ENCODE measurements at regions of chr3 and their contacts with region 1.

Region 1: GRCh38 chr3:169744366-169745054 is 20.4 kb downstream of the TERC start:
- DNase-seq: peak; percentile 23
- ATAC-seq: no peak
- H3K4me3 ChIP-seq: no peak overlapping the region
- H3K4me3 Mint-ChIP-seq: no peak overlapping the region
- H3K27ac ChIP-seq: no peak overlapping the region
- H3K27ac Mint-ChIP-seq: no peak overlapping the region
- H3K4me1 ChIP-seq: no peaks in the 10 kb centered on the region
- H3K4me1 Mint-ChIP-seq: no peaks in the 10 kb centered on the region
- H3K27me3 ChIP-seq: peaks cover 0 to 16% (median 11%) of the 10 kb centered on the region in 4 experiments
- H3K27me3 Mint-ChIP-seq: peaks cover 29% of the 10 kb centered on the region
- CTCF ChIP-seq: peak; percentile 46

Region 2: DNA sequence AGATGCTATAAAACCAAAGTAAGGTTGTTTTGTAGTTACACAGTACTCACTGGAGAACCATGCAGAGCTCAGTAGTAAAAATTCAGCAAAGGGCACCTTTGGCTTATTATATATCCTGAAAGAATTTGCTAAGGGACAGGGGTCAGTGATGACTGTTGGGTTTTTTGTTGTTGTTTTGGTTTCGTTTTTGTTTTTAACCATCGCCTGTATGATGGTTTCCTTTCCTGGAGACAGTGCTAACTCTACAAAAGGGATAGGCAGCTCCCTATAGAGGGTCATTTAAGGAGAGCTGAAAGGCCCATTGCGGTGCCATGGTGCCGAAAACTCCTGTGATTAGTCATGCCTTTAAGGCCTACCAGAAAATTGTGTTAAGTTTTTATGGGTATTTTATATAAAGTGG is 1530.6 kb before region 1 on chr3:
- CTCF ChIA-PET with region 1: interaction called, 12 read pairs
- POLR2A ChIA-PET with region 1: no interaction called
- intact Hi-C with region 1: loop called (anchors 5 kb)
- DNase-seq: no peak
- ATAC-seq: no peak
- H3K4me3 ChIP-seq: no peak overlapping the region
- H3K4me3 Mint-ChIP-seq: peak overlapping the region; percentile 8
- H3K27ac ChIP-seq: no peak overlapping the region
- H3K27ac Mint-ChIP-seq: no peak overlapping the region
- H3K4me1 ChIP-seq: no peaks in the 10 kb centered on the region
- H3K4me1 Mint-ChIP-seq: peaks cover 4% of the 10 kb centered on the region
- H3K27me3 ChIP-seq: no peaks in the 10 kb centered on the region
- H3K27me3 Mint-ChIP-seq: no peaks in the 10 kb centered on the region
- CTCF ChIP-seq: no peak

Region 3: GRCh38 chr3:168865022-168865551 is 879.4 kb before region 1 on chr3:
- CTCF ChIA-PET with region 1: interaction called, 10 read pairs
- POLR2A ChIA-PET with region 1: no interaction called
- intact Hi-C with region 1: no loop called
- DNase-seq: peak; percentile 11
- ATAC-seq: no peak
- H3K4me3 ChIP-seq: no peak overlapping the region
- H3K4me3 Mint-ChIP-seq: no peak overlapping the region
- H3K27ac ChIP-seq: no peak overlapping the region
- H3K27ac Mint-ChIP-seq: no peak overlapping the region
- H3K4me1 ChIP-seq: no peaks in the 10 kb centered on the region
- H3K4me1 Mint-ChIP-seq: no peaks in the 10 kb centered on the region
- H3K27me3 ChIP-seq: no peaks in the 10 kb centered on the region
- H3K27me3 Mint-ChIP-seq: peaks cover 4% of the 10 kb centered on the region
- CTCF ChIP-seq: peak; percentile 82

Region 4: GRCh38 chr3:169149349-169149890 is 595.1 kb before region 1 on chr3:
- CTCF ChIA-PET with region 1: interaction called, 16 read pairs
- POLR2A ChIA-PET with region 1: no interaction called
- intact Hi-C with region 1: loop called (anchors 5 kb)
- DNase-seq: peak; percentile 80
- ATAC-seq: peak; percentile 93
- H3K4me3 ChIP-seq: peak overlapping the region in 1 of 5 experiments; percentile 21
- H3K4me3 Mint-ChIP-seq: peak overlapping the region; percentile 59
- H3K27ac ChIP-seq: no peak overlapping the region
- H3K27ac Mint-ChIP-seq: no peak overlapping the region
- H3K4me1 ChIP-seq: peaks cover 28 to 30% of the 10 kb centered on the region in 2 donors
- H3K4me1 Mint-ChIP-seq: peaks cover 27% of the 10 kb centered on the region
- H3K27me3 ChIP-seq: peaks cover 0 to 54% (median 45%) of the 10 kb centered on the region in 4 experiments
- H3K27me3 Mint-ChIP-seq: peaks cover 54% of the 10 kb centered on the region
- CTCF ChIP-seq: peak; percentile 79

Region 5: GRCh38 chr3:169404520-169404890 is 340.0 kb before region 1 on chr3:
- CTCF ChIA-PET with region 1: no interaction called
- POLR2A ChIA-PET with region 1: no interaction called
- intact Hi-C with region 1: no loop called
- DNase-seq: no peak
- ATAC-seq: no peak
- H3K4me3 ChIP-seq: no peak overlapping the region
- H3K4me3 Mint-ChIP-seq: no peak overlapping the region
- H3K27ac ChIP-seq: no peak overlapping the region
- H3K27ac Mint-ChIP-seq: no peak overlapping the region
- H3K4me1 ChIP-seq: no peaks in the 10 kb centered on the region
- H3K4me1 Mint-ChIP-seq: no peaks in the 10 kb centered on the region
- H3K27me3 ChIP-seq: no peaks in the 10 kb centered on the region
- H3K27me3 Mint-ChIP-seq: peaks cover 16% of the 10 kb centered on the region
- CTCF ChIP-seq: no peak